Esophagus muscularis mucosa (tissue), 4 donors: ENCODE measurements at regions of chr13 and their contacts with region 1.

Region 1: DNA sequence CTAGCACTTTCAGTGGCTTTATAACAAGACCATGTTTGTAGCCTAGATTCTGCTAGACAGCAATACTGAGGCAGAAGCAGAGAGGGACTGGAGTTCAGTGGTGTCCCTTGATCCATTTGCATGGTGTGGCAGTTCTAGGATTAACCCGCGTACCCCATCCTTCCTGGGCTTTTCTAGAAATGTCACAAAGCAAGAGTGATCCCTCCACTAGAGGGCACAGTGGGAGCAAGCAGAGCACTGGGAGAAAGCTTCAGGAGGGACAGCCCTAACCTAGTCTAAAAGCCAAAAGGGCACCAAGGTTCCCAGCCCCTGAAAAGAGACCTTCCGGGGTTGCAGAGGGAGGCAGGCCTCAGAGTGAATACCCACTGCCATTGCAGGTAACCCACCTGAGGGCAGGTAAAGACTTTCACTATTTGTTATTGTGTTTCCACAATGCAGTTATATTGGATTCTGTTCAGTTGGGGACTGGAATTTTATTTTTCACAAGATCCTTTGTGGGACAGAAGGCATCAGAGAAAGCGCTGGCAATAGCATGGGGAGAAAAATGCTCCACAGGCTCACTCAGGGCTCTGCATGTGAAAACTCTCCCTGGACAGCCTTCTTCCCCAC is 170.6 kb downstream of the FLT1 start:
- DNase-seq: no peak
- H3K4me3 ChIP-seq: no peak overlapping the region
- H3K27ac ChIP-seq: no peak overlapping the region
- H3K4me1 ChIP-seq: peaks cover 6 to 16% (median 13%) of the 10 kb centered on the region in 4 donors
- H3K27me3 ChIP-seq: no peaks in the 10 kb centered on the region
- CTCF ChIP-seq: peak; percentile 46 to 68 (median 52)
- EP300 ChIP-seq: no peak
- POLR2A ChIP-seq: no peak

Region 2: GRCh38 chr13:28173793-28174192 is 150.5 kb before region 1 on chr13:
- intact Hi-C with region 1: no loop called
- DNase-seq: no peak
- H3K4me3 ChIP-seq: no peak overlapping the region
- H3K27ac ChIP-seq: no peak overlapping the region
- H3K4me1 ChIP-seq: no peaks in the 10 kb centered on the region
- H3K27me3 ChIP-seq: no peaks in the 10 kb centered on the region
- CTCF ChIP-seq: no peak
- EP300 ChIP-seq: no peak
- POLR2A ChIP-seq: no peak

Region 3: DNA sequence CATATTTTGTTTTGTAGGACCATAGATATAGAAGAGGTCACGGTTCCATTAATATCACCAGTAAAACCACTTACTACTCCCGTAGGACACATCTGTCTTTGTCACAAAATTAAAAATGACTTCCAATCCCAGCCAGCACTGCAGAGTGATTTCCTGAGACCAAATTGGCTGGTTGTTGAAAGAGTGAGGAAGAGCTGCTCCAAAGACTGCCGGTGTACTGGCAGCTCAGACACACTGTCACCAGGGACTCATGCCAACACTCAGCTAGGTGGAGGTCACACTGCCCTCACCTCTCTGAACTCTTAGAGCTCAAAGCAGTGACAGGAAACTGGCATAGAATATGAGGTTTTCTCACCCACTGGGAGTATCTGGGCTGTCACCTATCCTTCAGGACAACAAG is 118.6 kb after region 1 on chr13:
- intact Hi-C with region 1: no loop called
- DNase-seq: no peak
- H3K4me3 ChIP-seq: no peak overlapping the region
- H3K27ac ChIP-seq: no peak overlapping the region
- H3K4me1 ChIP-seq: peaks cover 0 to 4% (median 0%) of the 10 kb centered on the region in 4 donors
- H3K27me3 ChIP-seq: peaks cover 0 to 5% (median 0%) of the 10 kb centered on the region in 4 donors
- CTCF ChIP-seq: no peak
- EP300 ChIP-seq: no peak
- POLR2A ChIP-seq: no peak

Region 4: DNA sequence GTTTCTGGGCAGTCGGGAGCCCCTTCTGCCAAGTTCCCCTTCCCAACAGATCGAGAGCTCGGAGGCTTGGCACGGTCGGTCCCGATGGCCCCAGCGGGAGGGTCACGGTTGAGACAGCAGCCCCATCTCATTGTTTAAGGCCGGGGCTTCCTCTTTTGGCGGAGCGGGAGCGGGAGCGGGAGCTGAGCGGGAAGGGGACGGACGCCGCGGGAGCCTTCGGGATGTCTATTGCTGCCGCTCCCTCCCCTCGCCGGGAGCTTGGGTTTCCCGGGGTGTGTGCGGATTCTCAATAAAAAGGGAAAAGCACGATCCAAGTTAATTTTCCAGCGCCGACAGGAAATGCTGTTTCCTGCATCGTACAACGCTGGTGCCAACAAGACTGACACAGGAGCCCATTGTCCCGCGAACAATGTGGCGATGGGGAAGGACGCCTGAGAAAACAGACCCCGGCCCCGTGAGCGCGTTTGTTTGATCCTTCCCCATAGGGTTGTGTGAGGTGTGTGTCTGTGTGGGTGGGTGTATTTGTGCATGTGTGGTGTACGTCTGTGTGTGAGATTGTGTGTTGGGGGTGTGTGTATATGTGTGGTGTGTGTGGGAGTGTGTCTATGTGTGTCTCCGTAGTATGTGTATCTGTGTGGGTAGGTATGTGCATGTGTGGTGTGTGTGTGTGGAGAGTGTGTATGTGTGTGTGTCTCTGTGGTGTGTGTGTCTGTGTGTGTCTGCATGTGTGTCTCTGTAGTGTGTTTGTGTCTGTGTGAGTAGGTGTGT is 207.0 kb after region 1 on chr13:
- intact Hi-C with region 1: no loop called
- DNase-seq: no peak
- H3K4me3 ChIP-seq: peak overlapping the region; percentile 49 to 60 (median 52)
- H3K27ac ChIP-seq: peak overlapping the region; percentile 3 to 73 (median 46)
- H3K4me1 ChIP-seq: peaks cover 7 to 29% (median 27%) of the 10 kb centered on the region in 4 donors
- H3K27me3 ChIP-seq: peaks cover 0 to 81% (median 5%) of the 10 kb centered on the region in 4 donors
- CTCF ChIP-seq: no peak
- EP300 ChIP-seq: no peak
- POLR2A ChIP-seq: no peak

Region 5: GRCh38 chr13:28636674-28637317 is 312.5 kb after region 1 on chr13:
- intact Hi-C with region 1: loop called (anchors 10 kb)
- DNase-seq: no peak
- H3K4me3 ChIP-seq: no peak overlapping the region
- H3K27ac ChIP-seq: no peak overlapping the region
- H3K4me1 ChIP-seq: peaks cover 0 to 7% (median 0%) of the 10 kb centered on the region in 4 donors
- H3K27me3 ChIP-seq: no peaks in the 10 kb centered on the region
- CTCF ChIP-seq: peak; percentile 53 to 70 (median 55)
- EP300 ChIP-seq: no peak
- POLR2A ChIP-seq: no peak